Right ventricle myocardium inferior (tissue), 1 donor: ENCODE measurements at regions of chr6 and their contacts with region 1.

Region 1: GRCh38 chr6:30742316-30743098 is at the start of gene FLOT1:
- DNase-seq: peak; percentile 99
- ATAC-seq: peak; percentile 96
- total RNA-seq, gene FLOT1: 240 TPM

Region 2: DNA sequence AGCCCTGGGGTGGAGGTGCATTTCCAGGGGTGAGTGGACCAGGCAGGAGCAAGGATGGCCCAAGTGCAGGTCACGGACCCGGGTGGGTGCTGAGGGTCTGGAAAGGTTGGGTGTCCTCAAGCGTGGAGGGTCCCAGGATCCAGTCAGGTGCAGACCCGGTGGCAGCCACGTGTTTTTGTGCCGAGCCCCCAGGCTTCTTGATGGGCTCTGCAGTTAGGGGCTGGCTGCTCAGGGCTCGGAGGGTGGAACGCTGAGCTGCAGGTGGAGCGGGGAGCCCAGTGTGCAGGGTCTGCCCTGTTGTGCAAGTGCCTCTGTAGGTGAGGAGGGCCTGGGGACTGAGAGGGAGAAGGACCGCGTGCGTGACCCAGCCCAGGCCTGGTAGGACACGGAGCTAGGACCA is 324.1 kb before region 1 on chr6:
- intact Hi-C with region 1: no loop called
- DNase-seq: no peak
- ATAC-seq: no peak

Region 3: GRCh38 chr6:30541515-30542403 is 200.7 kb before region 1 on chr6:
- intact Hi-C with region 1: loop called (anchors 5 kb)
- DNase-seq: peak; percentile 88
- ATAC-seq: peak; percentile 72

Region 4: GRCh38 chr6:30571075-30571768 is 171.3 kb before region 1 on chr6 and contains the start of gene ABCF1:
- intact Hi-C with region 1: no loop called
- DNase-seq: peak; percentile 100
- ATAC-seq: peak; percentile 99
- total RNA-seq, gene ABCF1: 39.5 TPM

Region 5: GRCh38 chr6:30781743-30782424 is 39.4 kb after region 1 on chr6:
- intact Hi-C with region 1: loop called (anchors 2 kb)
- DNase-seq: peak; percentile 95
- ATAC-seq: peak; percentile 92

Region 6: GRCh38 chr6:30828027-30828960 is 85.8 kb after region 1 on chr6:
- intact Hi-C with region 1: loop called (anchors 2 kb)
- DNase-seq: peak; percentile 91
- ATAC-seq: peak; percentile 96

Region 7: GRCh38 chr6:30877419-30878371 is 135.2 kb after region 1 on chr6:
- intact Hi-C with region 1: loop called (anchors 5 kb)
- DNase-seq: peak; percentile 95
- ATAC-seq: peak; percentile 93

Region 8: DNA sequence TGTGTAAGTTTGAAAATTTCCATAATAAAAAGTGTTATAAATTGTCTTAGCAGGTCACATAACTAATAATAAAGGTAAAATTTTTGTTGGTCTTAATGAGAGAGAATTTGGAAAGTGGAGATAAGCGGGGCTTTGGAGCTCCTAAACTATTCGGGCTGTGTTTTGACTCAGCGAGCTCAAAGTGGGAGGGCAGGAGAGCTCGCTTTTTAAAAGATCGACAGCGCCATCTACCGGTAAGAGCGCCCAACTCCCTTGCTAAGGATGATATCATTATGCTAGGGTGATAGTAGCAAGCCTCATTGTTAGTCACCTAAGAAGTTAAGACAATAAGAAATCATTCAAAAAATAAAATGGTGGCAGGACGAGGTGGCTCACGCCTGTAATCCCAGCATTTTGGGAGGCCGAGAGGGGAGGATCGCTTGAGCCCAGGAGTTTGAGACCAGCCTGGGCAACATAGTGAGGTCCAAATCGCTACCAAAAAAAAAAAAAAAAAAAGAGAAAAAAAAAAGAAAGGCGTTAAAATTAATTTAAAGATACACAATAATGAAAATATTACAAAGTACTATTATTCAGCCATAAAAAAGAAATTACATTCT is 345.1 kb after region 1 on chr6:
- intact Hi-C with region 1: loop called (anchors 10 kb)
- DNase-seq: peak; percentile 77
- ATAC-seq: peak; percentile 91